ENCODE measurements at regions of chr17 and their contacts with region 1.

Region 1: DNA sequence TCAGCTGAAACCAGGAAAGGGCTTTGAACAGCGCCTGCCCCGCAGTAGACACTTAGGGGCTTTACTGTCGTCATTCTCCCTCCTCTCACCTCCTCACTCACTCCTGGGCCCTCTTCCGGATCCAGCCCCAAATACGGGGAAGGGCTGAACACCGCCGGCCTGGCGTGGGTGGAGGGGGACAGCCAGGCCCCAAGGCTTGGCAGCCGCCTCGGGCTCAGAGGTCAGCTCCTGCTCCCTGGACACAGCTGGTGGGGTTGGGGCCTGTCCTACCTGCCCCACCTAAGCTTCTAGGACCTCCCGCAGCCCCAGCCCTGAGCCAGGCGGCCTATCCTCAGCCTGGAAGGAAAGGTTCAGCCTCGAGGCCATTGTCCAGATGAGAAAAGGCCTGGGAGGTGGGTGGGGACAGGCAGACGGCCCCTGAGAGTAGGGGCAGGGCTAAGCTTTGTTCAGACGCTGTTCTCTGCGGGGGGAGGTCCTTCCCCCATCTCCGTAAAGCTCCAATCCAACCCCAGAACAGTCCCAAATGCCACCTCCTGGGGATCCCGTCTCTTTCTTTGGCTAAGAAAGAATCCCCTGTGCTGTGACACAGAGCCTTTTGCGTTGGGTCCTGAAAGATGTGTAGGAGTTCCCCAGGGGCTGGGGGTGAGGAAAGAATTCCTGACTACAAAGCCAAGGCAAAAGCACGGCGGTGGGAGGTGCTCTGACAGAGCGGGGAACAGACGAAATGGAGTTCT is 881 bp upstream of the LLGL1 start:
- DNase-seq: no peak
- H3K4me3 ChIP-seq: peak overlapping the region; percentile 36 to 45
- H3K27ac ChIP-seq: peak overlapping the region; percentile 52
- H3K4me1 ChIP-seq: peaks cover 22% of the 10 kb centered on the region
- H3K27me3 ChIP-seq: no peaks in the 10 kb centered on the region
- CTCF ChIP-seq: no peak
- POLR2A ChIP-seq: no peak

Region 2: GRCh38 chr17:18184143-18185031 is 40.2 kb before region 1 on chr17:
- intact Hi-C with region 1: loop called (anchors 5 kb)
- DNase-seq: no peak
- H3K4me3 ChIP-seq: peak overlapping the region; percentile 92 to 98
- H3K27ac ChIP-seq: peak overlapping the region; percentile 99
- H3K4me1 ChIP-seq: peaks cover 66% of the 10 kb centered on the region
- H3K27me3 ChIP-seq: no peaks in the 10 kb centered on the region
- CTCF ChIP-seq: no peak
- POLR2A ChIP-seq: no peak

Measured in vagina (tissue), 2 donors.